ENCODE measurements at regions of chr11 and their contacts with region 1.

Region 1: GRCh38 chr11:118051611-118052461 is 25.0 kb upstream of the TMPRSS4 start:
- DNase-seq: peak; percentile 85
- H3K4me3 Mint-ChIP-seq: peak overlapping the region; percentile 43
- H3K27ac Mint-ChIP-seq: peak overlapping the region; percentile 98
- H3K4me1 Mint-ChIP-seq: peaks cover 53% of the 10 kb centered on the region
- H3K27me3 Mint-ChIP-seq: peaks cover 9% of the 10 kb centered on the region

Region 2: GRCh38 chr11:117807482-117808327 is 244.1 kb before region 1 on chr11:
- CTCF ChIA-PET with region 1: interaction called, 84 read pairs
- DNase-seq: peak; percentile 83
- H3K4me3 Mint-ChIP-seq: no peak overlapping the region
- H3K27ac Mint-ChIP-seq: no peak overlapping the region
- H3K4me1 Mint-ChIP-seq: peaks cover 9% of the 10 kb centered on the region
- H3K27me3 Mint-ChIP-seq: peaks cover 53% of the 10 kb centered on the region

Region 3: GRCh38 chr11:117817368-117818040 is 234.3 kb before region 1 on chr11:
- CTCF ChIA-PET with region 1: interaction called, 55 read pairs
- DNase-seq: peak; percentile 88
- H3K4me3 Mint-ChIP-seq: no peak overlapping the region
- H3K27ac Mint-ChIP-seq: peak overlapping the region; percentile 80
- H3K4me1 Mint-ChIP-seq: peaks cover 54% of the 10 kb centered on the region
- H3K27me3 Mint-ChIP-seq: peaks cover 4% of the 10 kb centered on the region

Region 4: GRCh38 chr11:117828611-117829368 is 223.0 kb before region 1 on chr11:
- CTCF ChIA-PET with region 1: interaction called, 55 read pairs
- DNase-seq: peak; percentile 76
- H3K4me3 Mint-ChIP-seq: no peak overlapping the region
- H3K27ac Mint-ChIP-seq: peak overlapping the region; percentile 3
- H3K4me1 Mint-ChIP-seq: peaks cover 58% of the 10 kb centered on the region
- H3K27me3 Mint-ChIP-seq: peaks cover 44% of the 10 kb centered on the region

Region 5: DNA sequence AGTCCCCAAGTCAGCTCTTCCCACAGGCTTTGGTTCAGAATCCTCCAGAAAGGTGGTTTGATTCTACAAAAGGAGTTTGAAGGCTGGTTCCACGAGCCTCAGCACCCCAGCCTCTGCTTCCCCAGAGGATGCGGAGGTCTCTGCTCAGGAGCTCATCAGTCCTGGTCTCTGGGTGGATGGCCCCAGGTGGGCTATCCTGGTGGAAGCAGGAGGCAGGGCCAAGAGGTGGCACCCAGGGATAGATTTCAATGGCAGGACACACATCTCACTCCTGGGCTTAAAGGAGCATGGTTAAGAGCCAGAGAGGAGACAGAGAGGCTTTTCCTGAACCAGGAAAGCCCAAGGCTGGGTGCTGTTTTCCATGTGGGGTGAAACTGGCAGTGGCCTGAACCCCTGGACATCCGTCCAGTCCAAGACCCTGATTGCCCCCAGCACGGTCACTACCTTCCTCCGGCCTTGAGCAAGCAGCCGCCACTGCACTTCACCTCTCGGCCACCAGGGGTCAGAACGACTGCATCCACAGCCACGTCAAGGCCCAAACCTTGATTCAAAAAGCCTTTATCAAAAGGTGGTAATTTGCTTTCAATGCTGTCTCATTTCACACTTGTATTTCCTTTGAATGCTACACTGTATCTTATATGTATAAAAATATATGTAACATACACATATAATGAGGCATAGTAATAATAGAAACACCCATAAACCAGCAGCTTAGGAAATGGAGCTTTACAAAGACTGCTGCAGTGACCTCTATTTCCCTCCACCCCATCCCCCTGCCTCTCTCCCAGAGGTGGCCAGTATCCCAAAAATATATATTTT is 208.0 kb before region 1 on chr11:
- CTCF ChIA-PET with region 1: interaction called, 104 read pairs
- DNase-seq: peak; percentile 87
- H3K4me3 Mint-ChIP-seq: no peak overlapping the region
- H3K27ac Mint-ChIP-seq: no peak overlapping the region
- H3K4me1 Mint-ChIP-seq: no peaks in the 10 kb centered on the region
- H3K27me3 Mint-ChIP-seq: peaks cover 23% of the 10 kb centered on the region

Region 6: DNA sequence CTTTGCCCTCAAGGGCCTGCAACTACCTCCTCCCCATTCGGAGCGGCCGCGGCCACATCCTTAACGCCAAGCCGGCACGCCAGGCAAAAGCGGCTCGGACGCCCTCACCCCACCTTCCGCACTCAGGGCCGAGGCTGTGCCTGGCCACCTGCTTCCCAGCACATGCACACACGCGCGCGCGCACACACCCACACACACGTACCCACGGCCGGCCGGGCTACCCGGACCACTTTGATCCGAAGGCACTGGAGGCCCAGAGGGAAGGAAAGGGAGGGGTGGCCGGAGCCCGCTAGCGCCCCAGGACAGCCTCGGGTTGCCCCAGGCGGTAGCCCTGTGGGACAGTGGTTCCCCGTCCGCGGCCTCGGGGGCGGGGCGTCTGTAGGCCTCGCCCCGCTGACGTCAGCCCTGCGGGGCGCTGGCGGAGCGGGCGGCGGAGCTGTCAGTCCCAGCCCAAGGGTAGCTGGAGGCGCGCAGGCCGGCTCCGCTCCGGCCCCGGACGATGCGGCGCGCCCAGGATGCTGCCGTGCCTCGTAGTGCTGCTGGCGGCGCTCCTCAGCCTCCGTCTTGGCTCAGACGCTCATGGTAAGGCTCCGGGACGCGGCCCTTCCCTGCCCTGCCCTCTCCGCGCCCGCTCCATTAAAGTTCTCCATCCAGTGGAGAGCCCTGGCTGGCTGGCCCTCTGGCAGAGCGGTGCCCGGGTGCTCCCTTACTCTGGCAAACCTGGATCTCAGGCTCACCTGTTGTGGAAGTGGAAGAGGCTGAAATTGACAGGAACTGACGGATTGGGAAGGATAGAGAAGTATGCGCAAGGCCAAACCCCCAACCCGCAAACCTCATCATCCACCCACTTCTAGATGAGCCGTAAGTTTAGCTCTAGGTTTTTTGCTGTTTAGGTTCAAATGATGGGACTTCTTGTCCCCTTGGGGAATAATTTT is 65.6 kb before region 1 on chr11 and contains the start of gene IL10RA:
- CTCF ChIA-PET with region 1: interaction called, 39 read pairs
- DNase-seq: peak; percentile 87
- H3K4me3 Mint-ChIP-seq: peak within 1 kb of the TSS; percentile 82
- H3K27ac Mint-ChIP-seq: peak within 1 kb of the TSS; percentile 97
- H3K4me1 Mint-ChIP-seq: peaks cover 73% of the 10 kb centered on the region
- H3K27me3 Mint-ChIP-seq: no peaks in the 10 kb centered on the region

Region 7: DNA sequence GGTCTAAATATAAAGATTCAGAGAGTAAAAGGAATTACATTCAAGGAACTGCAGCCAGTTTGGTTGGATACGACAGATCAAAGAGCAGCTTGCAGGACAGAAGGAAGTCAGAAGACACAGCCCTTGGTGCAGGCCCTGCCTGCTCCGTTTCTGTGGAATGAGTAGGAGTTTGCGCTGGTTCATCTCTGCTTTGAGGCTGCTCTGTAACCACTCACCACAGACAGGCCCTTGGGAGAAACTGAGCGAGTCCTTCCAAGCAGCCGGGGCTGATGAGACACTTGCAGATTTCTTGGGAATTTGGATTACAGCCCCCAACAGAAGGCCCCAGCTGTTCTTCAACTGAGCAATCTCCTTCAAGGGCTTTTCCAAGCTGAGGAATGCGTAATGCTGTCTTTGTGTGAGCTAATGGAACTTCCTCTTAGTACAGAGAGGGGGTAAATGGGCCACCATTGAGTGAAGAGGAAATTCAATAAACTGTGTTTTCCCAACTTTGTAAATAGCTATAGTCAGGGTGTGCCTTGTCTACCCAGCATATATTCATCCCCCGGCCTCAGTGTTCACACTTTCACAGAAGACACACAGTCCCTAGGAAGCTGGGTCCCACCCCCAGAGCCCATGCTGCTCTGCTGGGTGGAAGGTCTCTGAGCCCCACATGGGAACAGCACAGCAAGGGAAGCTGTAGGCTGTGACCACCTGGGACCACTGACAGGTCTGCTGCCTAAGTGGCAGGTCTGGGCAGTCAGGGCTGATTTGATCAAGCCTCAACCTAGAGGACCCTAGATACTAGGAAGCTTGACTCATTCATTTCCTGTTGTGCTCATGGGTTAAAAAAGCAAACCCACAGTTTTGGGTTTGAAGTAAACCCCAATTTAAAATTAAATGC is 49.1 kb before region 1 on chr11:
- CTCF ChIA-PET with region 1: interaction called, 53 read pairs
- DNase-seq: peak; percentile 64
- H3K4me3 Mint-ChIP-seq: peak overlapping the region; percentile 56
- H3K27ac Mint-ChIP-seq: peak overlapping the region; percentile 98
- H3K4me1 Mint-ChIP-seq: peaks cover 100% of the 10 kb centered on the region
- H3K27me3 Mint-ChIP-seq: no peaks in the 10 kb centered on the region

Measured in activated naive CD4-positive, alpha-beta T cell treated with anti-CD3 and anti-CD28 coated beads, Interleukin-2, amount 10 ng/mL, durations not matched to agents 7 days and 5 days (primary cell).